ENCODE measurements at regions of chr1 and their contacts with region 1.

Region 1: GRCh38 chr1:100895540-100896483 is at the start of gene SLC30A7:
- DNase-seq: peak; percentile 98
- H3K4me3 Mint-ChIP-seq: peak within 1 kb of the TSS; percentile 99
- H3K27ac Mint-ChIP-seq: peak within 1 kb of the TSS; percentile 100
- H3K4me1 Mint-ChIP-seq: peaks cover 40% of the 10 kb centered on the region
- H3K27me3 Mint-ChIP-seq: no peaks in the 10 kb centered on the region
- total RNA-seq, gene SLC30A7: 40.0 to 43.4 TPM

Region 2: GRCh38 chr1:100866041-100866900 is 29.5 kb before region 1 on chr1:
- CTCF ChIA-PET with region 1: interaction called, 14 read pairs
- POLR2A ChIA-PET with region 1: interaction called, 3 read pairs
- intact Hi-C with region 1: no loop called
- DNase-seq: no peak
- H3K4me3 Mint-ChIP-seq: no peak overlapping the region
- H3K27ac Mint-ChIP-seq: no peak overlapping the region
- H3K4me1 Mint-ChIP-seq: no peaks in the 10 kb centered on the region
- H3K27me3 Mint-ChIP-seq: no peaks in the 10 kb centered on the region

Region 3: GRCh38 chr1:100928128-100928527 is 32.3 kb after region 1 on chr1:
- CTCF ChIA-PET with region 1: no interaction called
- POLR2A ChIA-PET with region 1: interaction called, 3 read pairs
- intact Hi-C with region 1: loop called (anchors 2 kb)
- DNase-seq: no peak
- H3K4me3 Mint-ChIP-seq: no peak overlapping the region
- H3K27ac Mint-ChIP-seq: no peak overlapping the region
- H3K4me1 Mint-ChIP-seq: peaks cover 58% of the 10 kb centered on the region
- H3K27me3 Mint-ChIP-seq: no peaks in the 10 kb centered on the region

Region 4: GRCh38 chr1:101013776-101014175 is 118.0 kb after region 1 on chr1:
- CTCF ChIA-PET with region 1: no interaction called
- POLR2A ChIA-PET with region 1: no interaction called
- intact Hi-C with region 1: no loop called
- DNase-seq: no peak
- H3K4me3 Mint-ChIP-seq: no peak overlapping the region
- H3K27ac Mint-ChIP-seq: no peak overlapping the region
- H3K4me1 Mint-ChIP-seq: peaks cover 5% of the 10 kb centered on the region
- H3K27me3 Mint-ChIP-seq: no peaks in the 10 kb centered on the region

Region 5: DNA sequence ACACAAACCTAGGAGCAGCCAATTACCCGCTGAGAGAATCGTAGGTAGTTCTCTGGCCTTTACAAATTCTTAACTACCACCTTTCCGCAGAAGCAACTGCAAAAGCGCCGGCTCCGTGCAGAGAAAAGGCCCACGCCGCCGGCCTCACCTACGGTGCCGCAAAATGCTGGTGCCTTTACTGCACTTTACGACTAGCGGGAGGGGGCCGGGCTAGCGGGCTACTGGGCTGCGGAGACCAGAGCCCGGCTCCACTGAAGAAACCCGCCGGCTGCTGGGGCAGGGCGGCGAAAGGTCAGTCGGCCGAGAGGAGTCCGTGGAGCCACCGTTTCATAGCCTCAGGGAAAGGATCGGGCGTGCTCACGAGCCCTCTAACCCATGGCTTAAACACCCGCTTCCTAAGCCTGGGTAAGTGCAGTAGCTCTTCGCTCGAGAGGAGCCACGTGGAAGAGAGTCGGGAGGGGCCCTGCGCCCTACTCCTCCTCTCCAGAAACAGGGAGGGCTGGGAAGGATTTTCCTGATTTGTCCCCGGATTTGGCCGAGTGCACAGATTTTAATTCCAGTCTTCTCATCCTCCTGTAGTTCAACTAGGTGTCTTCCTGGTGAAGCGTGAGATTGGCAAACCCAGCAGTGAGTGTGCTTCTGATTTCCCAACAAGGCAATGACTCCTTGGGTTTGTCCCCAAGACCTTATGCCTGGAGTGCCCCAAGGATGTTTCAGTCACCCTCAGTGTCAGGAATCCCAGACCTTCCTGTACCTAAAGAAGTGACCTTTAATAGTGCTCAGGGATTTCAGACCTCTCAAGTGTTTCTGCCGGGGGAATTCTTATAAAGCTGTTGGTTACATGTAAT is 130.1 kb after region 1 on chr1 and contains the start of gene DPH5:
- CTCF ChIA-PET with region 1: no interaction called
- POLR2A ChIA-PET with region 1: no interaction called
- intact Hi-C with region 1: loop called (anchors 1 kb)
- DNase-seq: peak; percentile 94
- H3K4me3 Mint-ChIP-seq: peak within 1 kb of the TSS; percentile 89
- H3K27ac Mint-ChIP-seq: peak within 1 kb of the TSS; percentile 89
- H3K4me1 Mint-ChIP-seq: peaks cover 54% of the 10 kb centered on the region
- H3K27me3 Mint-ChIP-seq: no peaks in the 10 kb centered on the region
- total RNA-seq, gene DPH5: 56.5 to 59.6 TPM

Region 6: DNA sequence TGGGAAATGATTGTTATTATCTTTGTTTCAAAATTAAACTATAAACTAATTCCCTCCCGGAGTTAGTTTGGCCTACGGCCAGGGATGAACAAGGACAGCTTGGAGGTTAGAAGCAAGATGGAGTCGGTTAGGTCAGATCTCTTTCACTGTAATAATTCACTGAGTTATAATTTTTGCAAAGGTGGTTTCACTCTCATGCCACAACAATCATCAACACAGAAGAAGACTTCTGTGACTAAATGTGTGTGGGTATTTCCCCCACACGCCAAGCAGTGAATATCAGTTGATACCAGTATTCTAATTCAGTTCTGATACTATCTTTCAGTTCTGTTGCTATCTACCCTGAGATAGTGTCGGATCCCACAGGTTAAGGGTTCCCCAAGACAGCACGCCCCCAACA is 556.1 kb after region 1 on chr1:
- CTCF ChIA-PET with region 1: no interaction called
- POLR2A ChIA-PET with region 1: no interaction called
- intact Hi-C with region 1: loop called (anchors 5 kb)
- DNase-seq: peak; percentile 44
- H3K4me3 Mint-ChIP-seq: no peak overlapping the region
- H3K27ac Mint-ChIP-seq: peak overlapping the region; percentile 31
- H3K4me1 Mint-ChIP-seq: peaks cover 34% of the 10 kb centered on the region
- H3K27me3 Mint-ChIP-seq: peaks cover 10% of the 10 kb centered on the region

Region 7: GRCh38 chr1:101520302-101520701 is 624.5 kb after region 1 on chr1:
- CTCF ChIA-PET with region 1: no interaction called
- POLR2A ChIA-PET with region 1: no interaction called
- intact Hi-C with region 1: no loop called
- DNase-seq: peak; percentile 13
- H3K4me3 Mint-ChIP-seq: no peak overlapping the region
- H3K27ac Mint-ChIP-seq: no peak overlapping the region
- H3K4me1 Mint-ChIP-seq: peaks cover 5% of the 10 kb centered on the region
- H3K27me3 Mint-ChIP-seq: peaks cover 3% of the 10 kb centered on the region